ENCODE measurements at regions of chr12 and their contacts with region 1.

Region 1: GRCh38 chr12:123905319-123905925 is 67.2 kb downstream of the CCDC92 start:
- DNase-seq: peak; percentile 87
- H3K4me3 Mint-ChIP-seq: no peak overlapping the region
- H3K27ac Mint-ChIP-seq: peak overlapping the region; percentile 39
- H3K4me1 Mint-ChIP-seq: peaks cover 9% of the 10 kb centered on the region
- H3K27me3 Mint-ChIP-seq: no peaks in the 10 kb centered on the region

Region 2: GRCh38 chr12:123877968-123878367 is 27.5 kb before region 1 on chr12:
- CTCF ChIA-PET with region 1: no interaction called
- intact Hi-C with region 1: no loop called
- DNase-seq: no peak
- H3K4me3 Mint-ChIP-seq: no peak overlapping the region
- H3K27ac Mint-ChIP-seq: no peak overlapping the region
- H3K4me1 Mint-ChIP-seq: no peaks in the 10 kb centered on the region
- H3K27me3 Mint-ChIP-seq: peaks cover 2% of the 10 kb centered on the region

Region 3: DNA sequence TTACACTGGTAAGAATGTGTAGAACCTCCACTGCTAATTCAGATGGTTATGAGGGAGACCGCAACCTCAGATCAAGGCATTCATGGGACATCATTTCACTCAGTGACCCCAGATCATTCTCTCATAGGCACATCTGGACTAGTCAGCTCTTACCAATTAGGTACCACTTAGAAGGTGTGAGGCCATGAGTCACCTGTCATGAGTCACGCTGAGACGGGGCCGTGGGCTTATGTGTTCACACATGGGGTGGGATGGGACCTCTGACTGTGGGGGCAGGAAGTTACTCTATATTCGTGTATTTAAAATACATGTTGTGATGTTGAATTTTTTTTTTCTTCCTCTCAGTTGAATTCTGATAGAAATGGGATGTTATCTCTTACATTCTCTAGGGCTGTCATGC is 11.3 kb after region 1 on chr12:
- CTCF ChIA-PET with region 1: interaction called, 17 read pairs
- intact Hi-C with region 1: no loop called
- DNase-seq: peak; percentile 66
- H3K4me3 Mint-ChIP-seq: no peak overlapping the region
- H3K27ac Mint-ChIP-seq: no peak overlapping the region
- H3K4me1 Mint-ChIP-seq: peaks cover 16% of the 10 kb centered on the region
- H3K27me3 Mint-ChIP-seq: no peaks in the 10 kb centered on the region

Region 4: DNA sequence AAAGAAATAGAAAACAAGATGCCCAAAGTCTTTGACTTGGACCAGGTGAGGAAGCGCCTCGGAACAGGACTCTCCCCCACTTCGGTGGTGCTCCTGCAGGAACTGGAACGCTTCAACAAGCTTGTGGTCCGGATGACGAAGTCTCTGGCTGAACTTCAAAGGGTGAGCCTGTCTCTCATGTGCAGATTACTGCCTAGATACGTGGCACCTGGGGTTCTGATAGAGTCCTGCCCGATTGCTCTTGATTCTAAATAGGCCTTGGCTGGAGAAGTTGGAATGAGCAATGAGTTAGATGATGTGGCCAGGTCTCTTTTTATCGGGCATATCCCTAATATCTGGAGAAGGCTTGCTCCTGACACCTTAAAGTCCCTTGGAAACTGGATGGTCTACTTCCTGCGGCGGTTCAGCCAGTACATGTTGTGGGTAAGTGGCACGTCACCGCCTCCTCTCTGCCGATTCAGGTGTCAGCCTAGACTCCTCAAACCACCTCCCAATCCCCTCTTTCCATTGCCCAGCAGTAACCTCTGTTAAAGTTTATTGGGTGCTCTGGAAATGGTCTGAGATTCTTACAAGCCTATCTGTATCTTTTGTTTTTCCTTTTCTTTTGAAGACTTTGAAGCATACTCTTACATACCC is 26.4 kb after region 1 on chr12:
- CTCF ChIA-PET with region 1: interaction called, 19 read pairs
- intact Hi-C with region 1: loop called (anchors 1 kb)
- DNase-seq: peak; percentile 66
- H3K4me3 Mint-ChIP-seq: peak overlapping the region; percentile 10
- H3K27ac Mint-ChIP-seq: no peak overlapping the region
- H3K4me1 Mint-ChIP-seq: peaks cover 18% of the 10 kb centered on the region
- H3K27me3 Mint-ChIP-seq: no peaks in the 10 kb centered on the region

Region 5: DNA sequence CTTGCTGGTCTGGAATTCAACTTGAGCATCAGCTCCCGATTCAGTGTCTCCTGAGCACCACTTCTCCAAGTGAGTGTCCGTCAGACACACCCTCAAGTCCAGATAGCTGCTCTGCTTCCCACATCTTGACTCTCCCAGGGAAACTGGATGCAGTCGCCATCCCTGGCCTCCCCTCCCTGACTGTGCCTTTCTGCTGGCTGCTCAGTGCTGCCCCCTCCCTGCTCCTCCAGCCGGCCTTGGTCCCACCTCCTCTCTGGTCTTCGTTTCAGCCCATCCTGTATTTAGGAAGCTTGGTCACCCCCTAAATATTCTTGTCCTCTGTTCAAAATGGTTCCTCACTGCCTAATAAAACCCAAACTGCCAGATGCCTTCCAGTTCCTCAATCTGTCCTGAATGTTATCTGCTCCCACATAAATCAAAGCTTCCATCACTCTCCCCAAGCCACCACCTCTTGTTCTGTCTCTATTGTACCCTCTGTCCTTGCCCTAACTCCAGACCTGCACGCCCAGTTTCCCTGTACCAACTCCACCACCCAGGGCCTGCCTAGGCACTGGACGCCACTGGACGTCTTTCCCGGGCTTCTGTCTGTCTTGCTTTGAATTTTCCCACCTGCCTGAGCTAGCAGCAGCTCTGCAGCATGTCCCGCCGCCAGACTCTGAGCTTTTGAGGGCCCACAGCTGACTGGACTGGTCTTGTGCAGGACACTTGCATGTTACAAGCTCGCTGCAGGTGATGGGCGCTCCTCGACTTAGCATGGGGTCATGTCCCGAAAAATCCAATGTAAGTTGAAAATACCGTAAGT is 33.5 kb after region 1 on chr12:
- CTCF ChIA-PET with region 1: interaction called, 19 read pairs
- intact Hi-C with region 1: loop called (anchors 2 kb)
- DNase-seq: peak; percentile 36
- H3K4me3 Mint-ChIP-seq: peak overlapping the region; percentile 55
- H3K27ac Mint-ChIP-seq: peak overlapping the region; percentile 60
- H3K4me1 Mint-ChIP-seq: peaks cover 24% of the 10 kb centered on the region
- H3K27me3 Mint-ChIP-seq: no peaks in the 10 kb centered on the region

Region 6: DNA sequence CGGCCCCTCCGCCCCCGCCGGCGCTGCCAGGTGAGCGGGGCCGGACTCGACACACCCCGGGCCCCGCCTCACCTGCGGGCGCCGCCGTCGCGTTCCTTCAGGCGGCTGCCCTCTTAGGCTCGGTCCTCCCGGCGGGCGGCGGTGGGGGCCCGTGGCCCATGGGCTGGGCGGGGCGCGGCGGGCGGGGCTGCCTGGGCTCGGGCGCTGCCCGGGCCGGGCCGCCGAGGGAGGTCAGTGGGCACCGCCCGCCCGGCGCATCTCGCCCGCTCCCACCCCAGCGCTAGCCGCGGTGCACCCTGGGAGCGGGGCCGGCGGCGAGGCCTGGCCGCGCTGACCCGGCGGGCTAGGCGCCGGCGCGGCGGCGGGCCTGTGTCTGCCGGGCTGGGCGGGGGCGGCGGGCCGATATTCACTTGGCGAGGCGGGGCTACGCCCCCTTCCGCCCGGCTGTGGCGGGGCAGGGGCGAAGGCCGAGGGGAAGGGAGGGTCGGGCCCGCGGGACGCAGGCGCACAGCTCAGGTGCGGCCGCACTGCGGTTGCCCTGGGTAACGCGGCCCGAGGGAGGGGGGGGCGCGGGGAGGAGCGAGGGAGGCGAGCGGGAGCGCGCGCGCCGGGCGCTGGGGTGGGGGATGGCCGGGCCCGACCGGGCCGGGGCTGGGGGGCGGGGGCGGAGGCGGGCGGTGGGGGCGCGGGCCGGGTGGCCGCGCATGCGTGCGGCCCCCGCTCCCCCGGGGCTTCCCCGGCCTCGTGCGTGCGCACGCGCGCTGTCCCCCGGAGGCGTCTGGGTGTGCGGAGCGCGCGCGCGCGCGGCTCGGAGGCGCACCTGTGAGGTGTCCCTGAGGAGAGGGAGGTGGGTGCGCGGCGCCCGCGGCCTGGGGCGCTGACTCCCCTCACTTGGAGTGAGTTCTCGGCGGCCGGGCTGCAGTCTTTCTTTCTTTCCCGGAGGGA is 67.3 kb after region 1 on chr12 and contains the starts of genes CCDC92 and ZNF664:
- CTCF ChIA-PET with region 1: interaction called, 3 read pairs
- intact Hi-C with region 1: loop called (anchors 2 kb)
- DNase-seq: peak; percentile 94
- H3K4me3 Mint-ChIP-seq: peak within 1 kb of the TSS; percentile 88
- H3K27ac Mint-ChIP-seq: peak within 1 kb of the TSS; percentile 61
- H3K4me1 Mint-ChIP-seq: peaks cover 33% of the 10 kb centered on the region
- H3K27me3 Mint-ChIP-seq: no peaks in the 10 kb centered on the region
- total RNA-seq, gene CCDC92: 3.3 to 3.7 TPM
- total RNA-seq, gene ZNF664: 42.2 to 46.0 TPM

Region 7: GRCh38 chr12:123983822-123984485 is 78.5 kb after region 1 on chr12:
- CTCF ChIA-PET with region 1: interaction called, 55 read pairs
- intact Hi-C with region 1: loop called (anchors 1 kb)
- DNase-seq: peak; percentile 63
- H3K4me3 Mint-ChIP-seq: no peak overlapping the region
- H3K27ac Mint-ChIP-seq: no peak overlapping the region
- H3K4me1 Mint-ChIP-seq: peaks cover 16% of the 10 kb centered on the region
- H3K27me3 Mint-ChIP-seq: no peaks in the 10 kb centered on the region

Region 8: DNA sequence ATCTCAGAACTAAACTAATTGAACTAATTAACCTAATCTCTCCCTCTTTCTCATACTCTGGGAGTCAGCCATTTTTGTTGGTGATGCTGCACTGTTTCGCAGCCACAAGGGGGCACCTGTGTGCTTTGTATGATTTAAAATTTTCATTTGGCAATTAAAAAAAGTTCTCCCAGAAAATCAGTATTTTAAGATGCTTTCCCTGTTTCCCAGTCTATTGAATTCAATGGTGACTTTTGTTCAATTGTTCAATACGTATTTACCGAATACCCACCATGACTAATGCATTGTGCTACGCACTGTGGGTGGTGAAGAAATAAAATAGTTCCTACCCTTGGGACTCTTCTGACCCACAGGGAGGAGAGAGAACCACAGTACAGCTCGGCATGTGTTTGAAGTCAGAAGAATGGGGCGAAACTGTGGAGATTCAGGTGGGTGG is 131.3 kb after region 1 on chr12:
- CTCF ChIA-PET with region 1: interaction called, 21 read pairs
- intact Hi-C with region 1: loop called (anchors 1 kb)
- DNase-seq: peak; percentile 59
- H3K4me3 Mint-ChIP-seq: no peak overlapping the region
- H3K27ac Mint-ChIP-seq: no peak overlapping the region
- H3K4me1 Mint-ChIP-seq: no peaks in the 10 kb centered on the region
- H3K27me3 Mint-ChIP-seq: peaks cover 2% of the 10 kb centered on the region

Region 9: GRCh38 chr12:124140944-124141486 is 235.6 kb after region 1 on chr12:
- CTCF ChIA-PET with region 1: no interaction called
- intact Hi-C with region 1: no loop called
- DNase-seq: no peak
- H3K4me3 Mint-ChIP-seq: no peak overlapping the region
- H3K27ac Mint-ChIP-seq: no peak overlapping the region
- H3K4me1 Mint-ChIP-seq: no peaks in the 10 kb centered on the region
- H3K27me3 Mint-ChIP-seq: peaks cover 17% of the 10 kb centered on the region

Measured in activated naive CD4-positive, alpha-beta T cell treated with anti-CD3 and anti-CD28 coated beads for 36 hours (primary cell).